ENCODE measurements at regions of chr7 and their contacts with region 1.

Region 1: DNA sequence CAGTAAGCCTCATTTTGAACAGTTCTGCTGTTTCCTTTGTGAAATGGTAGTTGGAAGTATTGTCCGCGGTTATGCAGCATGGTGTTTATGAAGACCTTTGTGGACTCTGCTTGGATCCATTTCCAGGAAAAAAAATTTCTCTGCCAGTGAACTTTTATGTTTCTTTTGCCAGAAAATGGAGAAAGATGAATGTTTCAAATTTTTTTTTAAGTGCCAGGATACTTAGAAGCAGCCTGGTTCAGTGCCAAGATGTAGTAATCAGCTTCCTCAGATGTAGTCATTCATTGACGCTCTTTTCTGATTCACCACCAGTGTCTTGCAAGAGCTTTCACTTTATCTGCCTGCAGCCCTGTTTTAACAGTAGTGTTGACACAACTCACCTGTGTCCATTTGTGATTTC is 258.2 kb downstream of the SDK1 start:
- DNase-seq: peak; percentile 83
- ATAC-seq: peak; percentile 67; the same call in 1 of the 2 replicates
- H3K4me3 ChIP-seq: no peak overlapping the region
- H3K27ac ChIP-seq: peak overlapping the region; percentile 20; the same call in 1 of the 2 replicates
- H3K4me1 ChIP-seq: peaks cover 24% of the 10 kb centered on the region
- H3K27me3 ChIP-seq: no peaks in the 10 kb centered on the region
- CTCF ChIP-seq: no peak

Region 2: GRCh38 chr7:4561795-4562194 is 1002.5 kb after region 1 on chr7:
- CTCF ChIA-PET with region 1: no interaction called
- POLR2A ChIA-PET with region 1: interaction called, 15 read pairs
- in situ Hi-C with region 1: no loop called
- intact Hi-C with region 1: no loop called
- DNase-seq: no peak
- ATAC-seq: 0 out of 2 replicates have a peak, but pooled peaks have one; percentile 49
- H3K4me3 ChIP-seq: no peak overlapping the region
- H3K27ac ChIP-seq: no peak overlapping the region
- H3K4me1 ChIP-seq: no peaks in the 10 kb centered on the region
- H3K27me3 ChIP-seq: peaks cover 13% of the 10 kb centered on the region; the same call in 1 of the 2 replicates
- CTCF ChIP-seq: peak; percentile 55